A673 (cell line): ENCODE measurements at regions of chr1 and their contacts with region 1.

Region 1: GRCh38 chr1:1425753-1426495 is 4.8 kb upstream of the ANKRD65 start:
- DNase-seq: no peak
- H3K4me3 ChIP-seq: no peak overlapping the region
- H3K27ac ChIP-seq: no peak overlapping the region
- H3K4me1 ChIP-seq: no peaks in the 10 kb centered on the region
- H3K27me3 ChIP-seq: no peaks in the 10 kb centered on the region
- CTCF ChIP-seq: no peak

Region 2: GRCh38 chr1:1256956-1257871 is 168.7 kb before region 1 on chr1:
- CTCF ChIA-PET with region 1: no interaction called
- POLR2A ChIA-PET with region 1: interaction called, 14 read pairs
- intact Hi-C with region 1: no loop called
- DNase-seq: no peak
- H3K4me3 ChIP-seq: no peak overlapping the region
- H3K27ac ChIP-seq: no peak overlapping the region
- H3K4me1 ChIP-seq: no peaks in the 10 kb centered on the region
- H3K27me3 ChIP-seq: no peaks in the 10 kb centered on the region
- CTCF ChIP-seq: no peak

Region 3: GRCh38 chr1:1915741-1916528 is 490.0 kb after region 1 on chr1:
- CTCF ChIA-PET with region 1: no interaction called
- POLR2A ChIA-PET with region 1: interaction called, 10 read pairs
- intact Hi-C with region 1: no loop called
- DNase-seq: no peak
- H3K4me3 ChIP-seq: no peak overlapping the region
- H3K27ac ChIP-seq: no peak overlapping the region
- H3K4me1 ChIP-seq: peaks cover 13% of the 10 kb centered on the region
- H3K27me3 ChIP-seq: no peaks in the 10 kb centered on the region
- CTCF ChIP-seq: no peak